Dendritic cell treated with granulocyte-macrophage colony-stimulating factor and Interleukin-4, amounts not matched to agents 40 ng/mL and 50 ng/mL, for 4 days (primary cell): ENCODE measurements at regions of chr1 and their contacts with region 1.

Region 1: DNA sequence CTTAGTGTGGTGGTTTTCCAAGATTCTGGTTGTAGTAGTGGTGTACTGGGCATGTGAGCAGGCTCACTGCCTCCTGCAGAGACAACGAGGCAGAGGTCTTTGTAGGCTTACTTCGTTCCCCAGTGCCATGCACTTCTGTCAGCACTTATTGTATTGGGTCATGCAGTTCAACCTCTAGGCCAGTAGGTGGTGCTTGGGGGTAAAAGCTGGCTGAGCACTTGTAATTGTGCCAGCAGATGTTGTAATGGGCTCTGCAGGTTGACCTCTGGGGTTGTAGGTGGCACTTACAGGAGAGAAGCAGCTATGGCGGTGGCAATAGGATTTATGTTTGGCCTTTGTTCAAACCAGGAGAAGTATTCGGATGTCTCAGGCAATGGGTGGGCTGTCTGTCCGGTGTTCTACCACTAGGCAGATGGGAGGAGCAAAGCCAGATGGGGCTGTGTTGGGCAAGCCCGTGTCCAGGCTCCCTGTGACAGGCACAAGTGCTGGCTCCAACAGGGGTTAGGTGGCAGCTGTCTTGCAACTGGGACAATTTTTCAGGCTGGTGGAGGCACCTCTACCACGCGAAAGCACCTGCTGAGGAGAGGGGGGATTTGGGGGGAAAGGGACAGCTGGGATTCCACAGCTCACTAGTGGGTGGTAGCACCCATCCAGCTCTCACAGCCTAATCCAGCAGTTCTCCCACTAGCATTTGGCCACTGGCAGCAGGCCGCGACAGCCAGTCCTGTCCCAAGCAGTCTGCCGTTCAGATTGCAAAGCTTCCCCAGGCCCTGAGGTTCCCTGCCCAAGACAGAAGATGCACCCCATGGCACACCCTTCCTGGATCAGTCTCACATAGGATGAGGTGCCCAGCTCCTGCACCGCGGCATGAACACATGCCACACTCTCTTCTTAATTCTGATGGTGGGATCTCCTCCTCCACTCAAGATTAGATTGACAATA is 274.5 kb downstream of the CTH start:
- H3K4me3 Mint-ChIP-seq: no peak overlapping the region
- H3K27ac Mint-ChIP-seq: no peak overlapping the region
- H3K4me1 Mint-ChIP-seq: no peaks in the 10 kb centered on the region
- H3K27me3 Mint-ChIP-seq: peaks cover 4% of the 10 kb centered on the region

Region 2: GRCh38 chr1:70528590-70529333 is 156.8 kb before region 1 on chr1:
- intact Hi-C with region 1: loop called (anchors 10 kb)
- H3K4me3 Mint-ChIP-seq: no peak overlapping the region
- H3K27ac Mint-ChIP-seq: no peak overlapping the region
- H3K4me1 Mint-ChIP-seq: no peaks in the 10 kb centered on the region
- H3K27me3 Mint-ChIP-seq: peaks cover 3% of the 10 kb centered on the region

Region 3: GRCh38 chr1:70571191-70571590 is 114.4 kb before region 1 on chr1:
- intact Hi-C with region 1: no loop called
- H3K4me3 Mint-ChIP-seq: no peak overlapping the region
- H3K27ac Mint-ChIP-seq: no peak overlapping the region
- H3K4me1 Mint-ChIP-seq: no peaks in the 10 kb centered on the region
- H3K27me3 Mint-ChIP-seq: no peaks in the 10 kb centered on the region

Region 4: DNA sequence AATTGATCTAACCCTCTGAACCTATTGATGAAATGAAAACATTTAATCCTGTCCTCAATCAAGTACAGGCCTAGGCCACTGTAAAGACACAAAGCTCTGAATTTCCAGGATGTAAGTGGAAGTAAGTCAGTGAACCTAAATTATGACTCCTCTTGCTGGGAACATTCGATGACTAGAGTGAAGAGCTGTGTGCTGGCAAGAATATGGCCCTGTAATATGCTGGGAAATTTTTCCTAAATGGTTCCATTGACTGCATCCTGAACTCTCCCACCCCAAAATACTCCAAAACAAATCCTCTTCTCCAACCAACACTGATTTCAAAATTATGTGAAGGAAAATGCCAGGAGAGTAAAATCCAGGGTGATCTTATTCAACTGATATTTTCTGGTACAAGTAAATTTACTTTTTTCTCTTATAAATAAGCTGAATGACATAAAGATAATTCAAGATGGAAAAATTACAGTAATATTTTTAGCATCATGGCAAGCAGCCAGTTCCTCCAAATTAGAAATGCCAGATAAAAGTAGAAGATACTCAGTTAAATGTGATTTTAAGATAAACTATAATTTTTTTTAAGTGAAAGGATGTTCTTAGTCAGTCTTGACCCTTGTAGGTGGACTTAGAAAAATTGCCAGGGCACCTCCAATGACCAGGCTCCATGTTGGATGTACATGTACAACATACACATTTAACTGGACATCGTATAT is 92.6 kb after region 1 on chr1:
- intact Hi-C with region 1: no loop called
- H3K4me3 Mint-ChIP-seq: no peak overlapping the region
- H3K27ac Mint-ChIP-seq: no peak overlapping the region
- H3K4me1 Mint-ChIP-seq: no peaks in the 10 kb centered on the region
- H3K27me3 Mint-ChIP-seq: no peaks in the 10 kb centered on the region

Region 5: DNA sequence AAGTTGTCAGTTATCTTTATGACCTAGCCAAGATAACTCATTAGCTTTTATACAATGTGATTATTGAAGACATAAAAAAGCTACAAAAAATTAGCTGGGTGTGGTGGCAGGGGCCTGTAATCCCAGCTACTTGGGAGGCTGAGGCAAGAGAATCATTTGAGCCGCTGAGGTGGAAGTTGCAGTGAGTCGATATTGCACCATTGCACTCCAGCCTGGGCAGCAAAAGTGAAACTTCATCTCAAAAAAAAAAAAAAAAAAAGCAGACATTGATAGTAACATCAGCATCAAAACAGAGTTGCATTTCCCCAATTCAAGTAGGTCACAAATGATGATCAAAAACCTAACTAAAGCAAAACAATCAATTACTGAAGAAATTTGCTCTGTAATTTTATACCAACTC is 170.6 kb after region 1 on chr1:
- intact Hi-C with region 1: loop called (anchors 10 kb)
- H3K4me3 Mint-ChIP-seq: no peak overlapping the region
- H3K27ac Mint-ChIP-seq: no peak overlapping the region
- H3K4me1 Mint-ChIP-seq: peaks cover 9% of the 10 kb centered on the region
- H3K27me3 Mint-ChIP-seq: no peaks in the 10 kb centered on the region

Region 6: DNA sequence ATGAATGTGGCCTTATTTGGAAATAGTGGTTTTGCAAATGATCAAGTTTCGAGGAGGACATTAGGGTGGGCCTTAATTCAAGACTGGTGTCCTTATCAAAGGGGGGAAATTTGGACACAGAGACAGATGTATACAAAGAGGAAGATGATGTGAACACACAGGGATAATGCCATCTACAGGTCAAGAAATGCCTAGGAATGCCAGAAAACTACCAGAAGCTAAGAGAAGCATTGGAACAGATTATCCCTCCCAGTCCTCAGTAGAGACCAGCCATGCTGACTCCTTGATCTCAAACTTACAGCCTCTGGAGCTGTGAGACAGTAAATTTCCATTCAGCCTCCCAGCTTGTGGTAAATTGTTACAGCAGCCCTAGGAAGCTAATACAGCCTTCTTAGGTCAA is 210.7 kb after region 1 on chr1:
- intact Hi-C with region 1: loop called (anchors 5 kb)
- H3K4me3 Mint-ChIP-seq: no peak overlapping the region
- H3K27ac Mint-ChIP-seq: no peak overlapping the region
- H3K4me1 Mint-ChIP-seq: peaks cover 35% of the 10 kb centered on the region
- H3K27me3 Mint-ChIP-seq: no peaks in the 10 kb centered on the region